Endothelial cell of umbilical vein (primary cell): ENCODE measurements at regions of chr1 and their contacts with region 1.

Region 1: GRCh38 chr1:55916481-55916880 is 662.9 kb downstream of the PLPP3 start:
- DNase-seq: no peak
- H3K4me3 ChIP-seq: no peak overlapping the region
- H3K27ac ChIP-seq: no peak overlapping the region
- H3K4me1 ChIP-seq: no peaks in the 10 kb centered on the region
- H3K27me3 ChIP-seq: no peaks in the 10 kb centered on the region
- CTCF ChIP-seq: no peak
- POLR2A ChIP-seq: no peak

Region 2: GRCh38 chr1:56169856-56170255 is 253.4 kb after region 1 on chr1:
- CTCF ChIA-PET with region 1: no interaction called
- POLR2A ChIA-PET with region 1: no interaction called
- dilution Hi-C with region 1: no loop called
- intact Hi-C with region 1: loop called (anchors 10 kb)
- DNase-seq: no peak
- H3K4me3 ChIP-seq: no peak overlapping the region
- H3K27ac ChIP-seq: no peak overlapping the region
- H3K4me1 ChIP-seq: no peaks in the 10 kb centered on the region
- H3K27me3 ChIP-seq: no peaks in the 10 kb centered on the region
- CTCF ChIP-seq: no peak
- POLR2A ChIP-seq: no peak